CD14-positive monocyte (primary cell): ENCODE measurements at regions of chr3 and their contacts with region 1.

Region 1: GRCh38 chr3:33658991-33659848 is 58.8 kb downstream of the CLASP2 start:
- DNase-seq: peak; percentile 32 to 47 (median 32)
- H3K4me3 ChIP-seq: peak overlapping the region; percentile 45 to 81 (median 65)
- H3K4me3 Mint-ChIP-seq: peak overlapping the region; percentile 71 to 88
- H3K27ac ChIP-seq: peak overlapping the region; percentile 77 to 78
- H3K27ac Mint-ChIP-seq: peak overlapping the region; percentile 4 to 93 (median 85)
- H3K4me1 ChIP-seq: peaks cover 18 to 28% of the 10 kb centered on the region in 2 donors
- H3K4me1 Mint-ChIP-seq: peaks cover 28% of the 10 kb centered on the region
- H3K27me3 ChIP-seq: no peaks in the 10 kb centered on the region
- H3K27me3 Mint-ChIP-seq: no peaks in the 10 kb centered on the region
- CTCF ChIP-seq: no peak

Region 2: DNA sequence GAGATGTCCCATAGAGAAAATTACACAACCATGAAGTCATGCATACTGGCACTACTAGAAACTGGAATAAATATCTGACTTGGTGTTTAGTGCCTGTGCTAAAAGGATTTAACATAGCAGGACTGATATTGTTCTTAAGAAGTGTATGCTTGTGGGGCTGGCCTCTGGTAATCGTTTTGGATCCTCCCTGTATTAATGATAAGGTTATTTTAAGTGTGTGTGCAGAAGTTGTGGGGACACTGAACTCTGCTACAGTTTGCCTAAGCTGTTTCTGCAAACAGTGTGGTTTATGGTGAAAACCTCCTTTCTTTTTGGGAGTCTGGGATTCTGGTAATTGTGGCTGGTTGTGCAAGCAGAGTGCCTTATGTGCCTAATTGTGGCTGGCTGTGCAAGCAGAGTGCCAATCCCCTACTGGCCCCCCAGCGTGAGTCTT is 61.9 kb before region 1 on chr3:
- intact Hi-C with region 1: no loop called
- DNase-seq: no peak
- H3K4me3 ChIP-seq: no peak overlapping the region
- H3K4me3 Mint-ChIP-seq: no peak overlapping the region
- H3K27ac ChIP-seq: no peak overlapping the region
- H3K27ac Mint-ChIP-seq: peak overlapping the region in 2 of 7 donors; percentile 6 to 63
- H3K4me1 ChIP-seq: no peaks in the 10 kb centered on the region
- H3K4me1 Mint-ChIP-seq: peaks cover 2% of the 10 kb centered on the region
- H3K27me3 ChIP-seq: no peaks in the 10 kb centered on the region
- H3K27me3 Mint-ChIP-seq: peaks cover 0 to 1% (median 0%) of the 10 kb centered on the region in 3 donors
- CTCF ChIP-seq: no peak

Region 3: GRCh38 chr3:33758864-33759263 is 99.6 kb after region 1 on chr3:
- intact Hi-C with region 1: no loop called
- DNase-seq: no peak
- H3K4me3 ChIP-seq: no peak overlapping the region
- H3K4me3 Mint-ChIP-seq: no peak overlapping the region
- H3K27ac ChIP-seq: no peak overlapping the region
- H3K27ac Mint-ChIP-seq: peak overlapping the region in 1 of 7 donors; percentile 57
- H3K4me1 ChIP-seq: no peaks in the 10 kb centered on the region
- H3K4me1 Mint-ChIP-seq: peaks cover 5% of the 10 kb centered on the region
- H3K27me3 ChIP-seq: no peaks in the 10 kb centered on the region
- H3K27me3 Mint-ChIP-seq: no peaks in the 10 kb centered on the region
- CTCF ChIP-seq: no peak

Region 4: GRCh38 chr3:33798411-33799201 is 139.4 kb after region 1 on chr3 and contains the start of gene PDCD6IP:
- intact Hi-C with region 1: loop called in 1 of 2 experiments (anchors 10 kb)
- DNase-seq: peak; percentile 91
- H3K4me3 ChIP-seq: peak within 1 kb of the TSS; percentile 73 to 81 (median 79)
- H3K4me3 Mint-ChIP-seq: peak within 1 kb of the TSS; percentile 92 to 99
- H3K27ac ChIP-seq: peak within 1 kb of the TSS; percentile 95 to 96
- H3K27ac Mint-ChIP-seq: peak within 1 kb of the TSS; percentile 96 to 99 (median 98)
- H3K4me1 ChIP-seq: peaks cover 26 to 30% of the 10 kb centered on the region in 2 donors
- H3K4me1 Mint-ChIP-seq: peaks cover 54% of the 10 kb centered on the region
- H3K27me3 ChIP-seq: no peaks in the 10 kb centered on the region
- H3K27me3 Mint-ChIP-seq: no peaks in the 10 kb centered on the region
- CTCF ChIP-seq: peak; percentile 12
- polyA plus RNA-seq, gene PDCD6IP: 88.8 to 100 (median 90.2) TPM